Posterior vena cava (tissue), 2 donors: ENCODE measurements at regions of chr1 and their contacts with region 1.

Region 1: DNA sequence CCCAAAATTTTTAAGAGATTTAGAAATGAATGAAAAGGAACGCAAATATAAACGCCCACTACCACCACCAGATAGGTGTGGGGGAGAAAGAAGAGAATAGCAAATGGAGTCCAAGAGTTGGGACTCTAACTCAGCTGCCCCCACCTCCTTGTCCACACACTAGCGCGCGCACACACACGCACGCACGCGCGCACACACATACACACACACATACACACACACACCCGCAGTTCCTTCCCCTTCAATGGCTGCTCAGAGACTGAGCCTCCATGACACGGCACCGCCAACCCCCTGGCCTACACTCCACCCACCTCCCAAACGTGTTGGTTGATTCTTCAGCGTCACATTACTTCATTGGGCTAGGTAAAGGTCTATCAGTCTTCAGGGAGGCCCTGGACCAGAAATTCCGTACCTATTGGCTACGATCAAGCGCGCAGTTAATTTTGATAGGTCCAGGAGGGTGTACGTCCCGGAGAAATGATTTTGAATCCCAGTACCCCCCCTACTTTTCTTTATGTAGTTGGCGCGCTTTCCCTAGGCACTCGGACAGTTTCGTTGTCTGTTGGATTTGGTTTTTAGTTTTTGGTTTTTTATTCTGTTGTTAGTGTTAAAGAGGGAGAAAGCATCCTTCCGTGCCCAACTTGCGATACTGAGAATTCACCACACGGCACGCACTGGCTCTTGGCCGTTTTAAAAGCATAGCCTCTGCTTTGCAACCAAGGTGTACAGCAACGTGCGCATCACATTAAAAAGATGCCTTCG is at the start of gene ANP32E:
- DNase-seq: peak; percentile 98
- total RNA-seq, gene ANP32E: 28.0 to 36.6 TPM

Region 2: GRCh38 chr1:150102986-150103385 is 133.0 kb before region 1 on chr1:
- intact Hi-C with region 1: no loop called
- DNase-seq: no peak

Region 3: GRCh38 chr1:150262388-150263320 is 26.6 kb after region 1 on chr1:
- intact Hi-C with region 1: loop called in 1 of 2 experiments (anchors 1 kb)
- DNase-seq: peak; percentile 50

Region 4: DNA sequence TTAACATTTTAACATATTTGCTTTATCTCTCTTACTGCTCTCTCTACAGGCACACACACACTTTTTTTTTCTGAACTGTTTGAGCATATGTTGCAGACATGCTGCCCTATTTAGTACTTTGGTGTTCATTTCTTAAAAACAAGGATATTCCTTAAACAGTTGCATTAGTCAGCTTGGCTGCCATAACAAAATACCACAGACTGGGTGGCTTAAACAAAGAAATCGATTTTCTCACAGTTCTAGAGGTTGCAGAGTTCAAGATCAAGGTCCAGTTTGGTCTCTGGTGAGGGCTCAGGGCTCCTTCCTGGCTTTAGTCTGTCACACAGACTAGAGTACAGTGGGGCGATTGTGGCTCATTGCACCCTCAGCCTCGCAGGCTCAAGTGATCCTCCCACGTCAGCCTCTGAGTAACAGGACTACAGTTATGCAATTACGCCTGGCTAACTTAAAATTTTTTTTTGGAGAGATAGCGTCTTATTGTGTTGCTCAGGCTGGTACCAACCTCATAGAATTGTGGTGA is 174.6 kb after region 1 on chr1:
- intact Hi-C with region 1: no loop called
- DNase-seq: no peak